AG04450 (cell line): ENCODE measurements at regions of chr2 and their contacts with region 1.

Region 1: DNA sequence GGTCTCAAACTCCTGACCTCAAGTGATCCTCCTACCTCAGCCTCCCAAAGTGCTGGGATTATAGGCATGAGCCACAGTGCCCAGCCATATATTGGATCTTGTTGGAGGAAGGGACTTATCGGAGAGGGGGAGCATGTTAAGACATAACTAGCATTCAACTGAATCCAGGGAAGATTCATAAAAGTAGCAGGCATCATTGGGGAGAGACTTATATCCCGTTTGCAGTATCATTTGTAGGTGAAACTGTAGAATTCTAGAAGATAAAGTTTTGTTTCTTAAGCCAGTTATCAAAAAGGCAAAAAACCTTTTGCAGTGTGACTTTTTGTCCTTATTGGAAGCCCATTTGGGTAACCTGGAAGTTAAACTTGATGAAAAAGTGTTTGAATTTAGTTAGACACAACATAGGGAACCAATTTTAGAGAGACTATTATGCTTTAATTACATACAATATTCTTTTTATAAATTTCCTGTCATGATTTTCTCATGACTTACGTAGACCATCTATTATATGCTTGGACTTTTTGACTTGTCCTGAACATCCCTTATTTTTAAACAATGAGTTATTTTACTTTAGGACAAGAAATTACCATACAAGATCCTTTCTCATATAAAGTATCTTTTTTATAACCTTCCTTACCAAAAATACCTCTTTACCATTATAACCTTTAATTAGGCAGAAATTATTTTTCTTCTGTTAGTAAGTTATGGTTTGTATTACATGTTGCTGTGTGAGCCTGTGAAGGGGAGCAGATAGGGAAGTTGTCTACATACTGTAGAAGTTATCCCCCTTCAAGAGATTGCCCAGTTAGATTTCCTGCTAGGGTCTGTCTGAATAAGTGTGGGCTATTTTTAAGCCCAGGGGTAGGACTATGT is 20.3 kb downstream of the RAB3GAP1 start:
- DNase-seq: no peak
- H3K4me3 ChIP-seq: no peak overlapping the region
- H3K27ac ChIP-seq: no peak overlapping the region
- H3K27me3 ChIP-seq: no peaks in the 10 kb centered on the region
- CTCF ChIP-seq: no peak

Region 2: GRCh38 chr2:134539981-134540380 is 532.4 kb before region 1 on chr2:
- CTCF ChIA-PET with region 1: no interaction called
- POLR2A ChIA-PET with region 1: no interaction called
- DNase-seq: no peak
- H3K4me3 ChIP-seq: no peak overlapping the region
- H3K27ac ChIP-seq: no peak overlapping the region
- H3K27me3 ChIP-seq: peaks cover 8% of the 10 kb centered on the region
- CTCF ChIP-seq: no peak

Region 3: DNA sequence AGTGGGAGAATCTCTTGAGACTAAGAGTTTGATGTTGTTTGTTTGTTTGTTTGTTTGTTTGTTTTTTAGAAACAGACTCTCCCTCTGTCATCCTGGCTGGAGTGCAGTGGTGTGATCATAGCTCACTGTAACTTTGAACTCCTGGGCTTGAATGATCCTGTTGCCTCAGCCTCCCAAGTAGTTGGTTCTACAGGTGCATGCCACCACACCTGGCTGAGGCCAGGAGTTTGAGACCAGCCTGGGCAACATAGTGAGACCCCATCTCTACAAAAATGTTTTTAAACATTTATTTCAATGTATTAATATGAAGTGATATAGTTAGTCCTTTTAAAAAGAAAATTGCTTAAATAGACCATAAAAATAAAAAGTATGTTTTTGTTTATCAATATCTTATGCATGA is 60.7 kb before region 1 on chr2:
- CTCF ChIA-PET with region 1: no interaction called
- POLR2A ChIA-PET with region 1: no interaction called
- DNase-seq: no peak
- H3K4me3 ChIP-seq: no peak overlapping the region
- H3K27ac ChIP-seq: no peak overlapping the region
- H3K27me3 ChIP-seq: no peaks in the 10 kb centered on the region
- CTCF ChIP-seq: no peak

Region 4: GRCh38 chr2:135052042-135052876 is 20.1 kb before region 1 on chr2 and contains the start of gene RAB3GAP1:
- CTCF ChIA-PET with region 1: no interaction called
- POLR2A ChIA-PET with region 1: interaction called, 10 read pairs
- DNase-seq: peak; percentile 41
- H3K4me3 ChIP-seq: peak within 1 kb of the TSS; percentile 99
- H3K27ac ChIP-seq: peak within 1 kb of the TSS; percentile 98
- H3K27me3 ChIP-seq: no peaks in the 10 kb centered on the region
- CTCF ChIP-seq: no peak
- polyA plus RNA-seq, gene RAB3GAP1: 42.6 and 47.5 TPM in 2 replicates